ENCODE measurements at regions of chr15 and their contacts with region 1.

Region 1: DNA sequence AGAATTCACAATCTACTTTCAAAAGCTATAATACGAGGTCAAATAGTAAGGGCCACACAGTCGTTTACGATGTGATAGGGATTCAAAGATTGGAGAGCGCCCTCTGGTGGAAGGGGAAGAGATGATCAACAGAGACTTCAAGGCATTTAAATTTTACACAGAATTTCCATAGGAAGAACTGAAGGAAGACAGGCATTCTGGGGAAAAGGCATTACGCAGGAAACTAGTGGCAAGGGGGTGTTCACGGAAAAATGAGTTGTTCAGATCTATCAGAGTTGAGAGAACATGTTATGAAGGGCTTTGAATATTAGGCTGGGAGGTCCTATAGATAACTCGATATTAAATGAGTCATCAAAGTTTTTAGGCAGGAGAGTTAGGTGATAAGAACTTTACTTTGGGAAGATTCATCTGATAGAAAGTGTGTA is 128.7 kb downstream of the FRMD5 start:
- DNase-seq: peak; percentile 80

Region 2: GRCh38 chr15:43903864-43904290 is 162.5 kb before region 1 on chr15:
- in situ Hi-C with region 1: loop called (anchors 25 kb)
- DNase-seq: peak; percentile 71